Right cardiac atrium (tissue), 5 donors: ENCODE measurements at regions of chr7 and their contacts with region 1.

Region 1: GRCh38 chr7:74026903-74027551 is 946 bp upstream of the ELN start:
- DNase-seq: peak; percentile 84 to 95 (median 94)
- ATAC-seq: peak; percentile 57 to 64
- H3K4me3 ChIP-seq: no peak overlapping the region
- H3K27ac ChIP-seq: peak overlapping the region; percentile 3
- H3K4me1 ChIP-seq: peaks cover 8% of the 10 kb centered on the region
- H3K27me3 ChIP-seq: no peaks in the 10 kb centered on the region

Region 2: GRCh38 chr7:73865738-73866445 is 161.1 kb before region 1 on chr7:
- intact Hi-C with region 1: loop called (anchors 2 to 5 kb)
- DNase-seq: peak; percentile 63 to 73 (median 69)
- ATAC-seq: peak; percentile 60 to 76
- H3K4me3 ChIP-seq: no peak overlapping the region
- H3K27ac ChIP-seq: no peak overlapping the region
- H3K4me1 ChIP-seq: no peaks in the 10 kb centered on the region
- H3K27me3 ChIP-seq: no peaks in the 10 kb centered on the region

Region 3: DNA sequence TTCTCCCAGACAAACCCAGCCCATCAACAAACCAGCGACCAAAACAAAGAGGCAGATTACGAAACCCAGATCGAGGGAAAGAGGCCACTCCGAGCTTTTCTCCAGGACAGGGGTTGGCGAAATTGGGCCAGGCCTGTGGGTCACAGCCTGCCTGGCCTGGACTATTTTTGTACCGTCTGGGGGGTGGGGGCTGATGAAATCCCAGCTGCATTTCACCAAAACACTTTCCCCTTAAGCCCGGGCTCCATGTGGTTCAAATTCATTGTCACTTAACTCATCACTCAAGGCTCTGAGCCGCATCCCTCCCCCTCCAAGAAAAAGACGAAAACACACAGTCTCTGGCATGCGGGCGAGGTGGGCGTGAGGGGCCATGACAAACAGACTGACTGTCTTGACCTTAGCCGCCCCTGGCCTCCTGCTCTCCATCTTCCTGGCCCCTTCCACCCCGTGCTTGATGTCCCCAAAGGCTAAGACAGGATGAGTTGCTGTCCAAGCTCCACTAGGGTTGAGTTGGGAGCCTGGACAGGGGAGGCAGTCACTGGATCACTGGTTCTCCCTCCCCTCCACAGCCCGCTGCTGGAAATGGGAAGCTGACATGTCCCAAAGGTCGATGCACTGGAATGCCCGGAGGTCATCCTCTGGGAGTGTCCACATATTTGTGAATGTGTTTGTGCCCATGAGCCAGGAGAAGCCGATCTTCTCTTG is 146.9 kb before region 1 on chr7:
- intact Hi-C with region 1: loop called in 1 of 4 experiments (anchors 5 kb)
- DNase-seq: peak; percentile 80 to 88 (median 87)
- ATAC-seq: peak; percentile 76
- H3K4me3 ChIP-seq: no peak overlapping the region
- H3K27ac ChIP-seq: peak overlapping the region; percentile 49
- H3K4me1 ChIP-seq: peaks cover 8% of the 10 kb centered on the region
- H3K27me3 ChIP-seq: no peaks in the 10 kb centered on the region

Region 4: DNA sequence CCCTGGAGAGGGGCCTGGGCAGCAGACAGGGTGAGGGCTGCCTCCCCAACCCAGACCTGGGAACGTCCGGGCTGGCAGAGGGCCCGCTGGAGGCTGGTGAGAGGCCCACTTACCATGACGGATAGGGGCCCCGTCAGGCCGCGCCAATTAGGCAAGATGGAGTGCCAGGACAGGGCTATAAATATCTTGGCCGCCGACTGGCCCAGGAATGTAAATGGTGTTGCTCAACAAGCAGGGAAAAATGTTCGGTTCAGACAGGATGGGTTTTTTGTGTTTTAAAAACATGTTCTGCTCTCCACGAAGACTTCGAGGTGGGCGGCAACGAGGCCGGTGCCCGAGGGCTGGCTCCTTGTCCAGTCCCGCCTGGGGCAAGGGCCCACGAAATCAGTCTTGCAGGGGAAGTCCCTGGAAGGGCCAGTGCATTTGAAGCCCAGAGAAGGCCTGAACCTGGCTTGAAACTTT is 34.9 kb before region 1 on chr7:
- intact Hi-C with region 1: loop called in 1 of 4 experiments (anchors 5 kb)
- DNase-seq: peak; percentile 75 to 88 (median 87)
- ATAC-seq: peak; percentile 50 to 68
- H3K4me3 ChIP-seq: no peak overlapping the region
- H3K27ac ChIP-seq: peak overlapping the region; percentile 13
- H3K4me1 ChIP-seq: peaks cover 2% of the 10 kb centered on the region
- H3K27me3 ChIP-seq: no peaks in the 10 kb centered on the region

Region 5: DNA sequence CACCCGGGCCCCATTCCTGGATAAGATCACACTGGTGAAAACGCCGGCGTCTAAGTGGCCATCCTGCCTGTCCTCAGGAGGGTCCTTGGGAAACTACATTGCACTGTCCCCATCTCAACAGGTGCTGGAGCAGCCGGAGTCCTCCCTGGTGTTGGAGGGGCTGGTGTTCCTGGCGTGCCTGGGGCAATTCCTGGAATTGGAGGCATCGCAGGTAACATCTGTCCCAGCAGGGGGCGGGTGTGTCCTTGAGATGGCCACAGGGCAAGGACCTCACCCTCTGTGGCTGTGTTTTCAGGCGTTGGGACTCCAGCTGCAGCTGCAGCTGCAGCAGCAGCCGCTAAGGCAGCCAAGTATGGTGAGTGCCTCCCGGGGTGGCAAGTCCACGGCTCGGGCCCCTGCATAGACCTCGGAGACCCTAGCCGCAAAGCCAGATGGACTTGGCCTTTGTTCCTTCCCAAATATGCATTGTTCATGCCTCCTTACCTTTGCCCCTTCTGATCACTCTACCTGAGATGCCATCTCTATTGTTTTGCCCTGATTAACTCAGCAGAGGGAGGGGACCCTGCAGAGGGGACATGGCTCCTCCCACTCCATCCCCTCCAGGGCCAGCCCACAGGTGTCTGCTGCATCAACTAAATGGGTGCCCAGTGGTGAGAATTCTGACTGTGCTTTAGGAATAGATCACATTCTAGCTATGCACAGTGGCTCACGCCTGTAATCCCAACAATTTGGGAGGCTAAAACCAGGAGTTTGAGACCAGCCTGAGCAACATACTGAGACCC is 24.8 kb after region 1 on chr7:
- intact Hi-C with region 1: no loop called
- DNase-seq: peak; percentile 21 to 54 (median 49)
- ATAC-seq: peak in 1 of 2 donors; percentile 7
- H3K4me3 ChIP-seq: no peak overlapping the region
- H3K27ac ChIP-seq: no peak overlapping the region
- H3K4me1 ChIP-seq: no peaks in the 10 kb centered on the region
- H3K27me3 ChIP-seq: no peaks in the 10 kb centered on the region

Region 6: GRCh38 chr7:74164985-74165456 is 138.0 kb after region 1 on chr7:
- intact Hi-C with region 1: no loop called
- DNase-seq: no peak
- ATAC-seq: no peak
- H3K4me3 ChIP-seq: no peak overlapping the region
- H3K27ac ChIP-seq: no peak overlapping the region
- H3K4me1 ChIP-seq: no peaks in the 10 kb centered on the region
- H3K27me3 ChIP-seq: no peaks in the 10 kb centered on the region